Heart left ventricle (tissue), 16 donors: ENCODE measurements at regions of chr11 and their contacts with region 1.

Region 1: GRCh38 chr11:119196833-119197483 is 9.2 kb upstream of the CBL start:
- DNase-seq: peak in 3 of 5 donors; percentile 50 to 68 (median 63)
- ATAC-seq: peak in 3 of 4 donors; percentile 87 to 90 (median 90)
- H3K4me3 ChIP-seq: no peak overlapping the region
- H3K27ac ChIP-seq: no peak overlapping the region
- H3K4me1 ChIP-seq: peaks cover 0 to 16% (median 0%) of the 10 kb centered on the region in 12 donors
- H3K27me3 ChIP-seq: no peaks in the 10 kb centered on the region
- CTCF ChIP-seq: peak; percentile 67 to 87 (median 80)
- POLR2A ChIP-seq: no peak

Region 2: DNA sequence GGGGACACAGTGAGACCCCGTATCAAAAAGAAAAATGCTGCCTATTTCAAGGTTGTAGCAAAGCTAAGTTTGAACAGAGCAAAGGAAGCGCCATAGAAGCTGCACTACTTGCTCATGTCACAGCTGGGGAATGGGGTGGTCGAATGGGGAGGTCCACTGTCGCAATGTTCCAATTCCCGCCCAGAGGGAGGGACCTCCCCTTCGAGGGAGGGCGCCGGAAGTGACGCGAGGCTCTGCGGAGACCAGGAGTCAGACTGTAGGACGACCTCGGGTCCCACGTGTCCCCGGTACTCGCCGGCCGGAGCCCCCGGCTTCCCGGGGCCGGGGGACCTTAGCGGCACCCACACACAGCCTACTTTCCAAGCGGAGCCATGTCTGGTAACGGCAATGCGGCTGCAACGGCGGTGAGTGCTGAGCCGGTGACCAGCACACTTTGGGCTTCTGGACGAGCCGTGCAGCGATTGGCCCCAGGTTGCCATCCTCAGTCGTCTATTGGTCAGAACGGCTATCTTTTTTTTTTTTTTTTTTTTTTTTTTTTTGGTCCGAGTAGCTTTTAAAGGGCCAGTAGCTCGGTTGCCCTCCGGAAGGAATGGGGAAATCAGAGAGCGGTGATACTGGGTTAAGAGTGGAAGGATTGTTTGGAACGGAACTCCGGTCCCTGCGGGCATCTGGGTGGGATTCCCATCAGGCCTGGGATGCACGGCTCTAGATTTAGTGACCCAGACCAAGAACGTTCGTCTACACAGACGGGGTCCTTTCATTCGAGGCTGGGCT is 112.1 kb before region 1 on chr11 and contains the start of gene HMBS:
- intact Hi-C with region 1: loop called in 2 of 10 experiments (anchors 10 kb)
- DNase-seq: peak; percentile 92 to 97 (median 95)
- ATAC-seq: peak; percentile 95 to 98 (median 98)
- H3K4me3 ChIP-seq: peak within 1 kb of the TSS; percentile 49 to 89 (median 77)
- H3K27ac ChIP-seq: peak within 1 kb of the TSS; percentile 73 to 98 (median 91)
- H3K4me1 ChIP-seq: peaks cover 0 to 33% (median 11%) of the 10 kb centered on the region in 12 donors
- H3K27me3 ChIP-seq: no peaks in the 10 kb centered on the region
- CTCF ChIP-seq: no peak
- POLR2A ChIP-seq: peak in 1 of 2 donors; percentile 47
- total RNA-seq, gene HMBS: 8.1 to 24.1 (median 16.6) TPM

Region 3: DNA sequence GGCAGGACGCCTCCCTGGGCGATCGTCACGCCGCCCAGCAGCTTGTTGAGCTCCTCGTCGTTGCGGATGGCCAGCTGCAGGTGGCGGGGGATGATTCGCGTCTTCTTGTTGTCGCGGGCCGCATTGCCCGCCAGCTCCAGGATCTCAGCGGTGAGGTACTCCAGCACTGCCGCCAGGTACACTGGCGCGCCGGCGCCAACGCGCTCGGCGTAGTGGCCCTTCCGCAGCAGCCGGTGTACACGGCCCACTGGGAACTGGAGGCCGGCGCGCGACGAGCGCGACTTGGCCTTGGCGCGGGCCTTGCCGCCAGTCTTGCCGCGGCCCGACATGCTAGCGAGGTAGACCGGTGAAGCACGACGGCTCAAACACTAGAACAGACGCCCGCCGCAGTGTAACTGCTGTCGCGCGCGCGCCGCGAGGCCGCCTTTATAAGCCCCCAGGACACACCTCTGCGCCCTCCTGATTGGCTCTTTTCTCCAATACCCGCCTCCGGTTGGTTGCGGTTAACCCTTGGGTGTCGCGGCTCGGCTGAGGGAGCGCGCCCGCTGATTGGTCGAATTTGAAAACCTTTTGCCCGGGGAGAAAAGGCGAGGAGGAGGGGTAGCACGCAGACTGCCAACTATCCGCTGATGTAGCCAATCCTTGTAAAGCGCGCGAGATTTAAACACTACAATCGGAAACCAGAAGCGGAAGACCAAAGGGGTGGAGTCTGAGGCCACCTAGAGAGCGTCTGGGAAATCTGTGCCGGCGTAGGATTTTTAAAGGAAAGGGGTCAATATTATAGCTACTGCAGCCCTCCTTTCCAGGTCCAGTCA is 101.7 kb before region 1 on chr11:
- intact Hi-C with region 1: loop called in 5 of 10 experiments (anchors 2 to 10 kb)
- DNase-seq: peak; percentile 99
- ATAC-seq: peak; percentile 96 to 98 (median 96)
- H3K4me3 ChIP-seq: peak overlapping the region; percentile 62 to 88 (median 77)
- H3K27ac ChIP-seq: peak overlapping the region; percentile 60 to 97 (median 89)
- H3K4me1 ChIP-seq: peaks cover 7 to 38% (median 20%) of the 10 kb centered on the region in 12 donors
- H3K27me3 ChIP-seq: no peaks in the 10 kb centered on the region
- CTCF ChIP-seq: peak in 5 of 12 donors; percentile 0 to 30 (median 6)
- POLR2A ChIP-seq: peak; percentile 70 to 98

Region 4: DNA sequence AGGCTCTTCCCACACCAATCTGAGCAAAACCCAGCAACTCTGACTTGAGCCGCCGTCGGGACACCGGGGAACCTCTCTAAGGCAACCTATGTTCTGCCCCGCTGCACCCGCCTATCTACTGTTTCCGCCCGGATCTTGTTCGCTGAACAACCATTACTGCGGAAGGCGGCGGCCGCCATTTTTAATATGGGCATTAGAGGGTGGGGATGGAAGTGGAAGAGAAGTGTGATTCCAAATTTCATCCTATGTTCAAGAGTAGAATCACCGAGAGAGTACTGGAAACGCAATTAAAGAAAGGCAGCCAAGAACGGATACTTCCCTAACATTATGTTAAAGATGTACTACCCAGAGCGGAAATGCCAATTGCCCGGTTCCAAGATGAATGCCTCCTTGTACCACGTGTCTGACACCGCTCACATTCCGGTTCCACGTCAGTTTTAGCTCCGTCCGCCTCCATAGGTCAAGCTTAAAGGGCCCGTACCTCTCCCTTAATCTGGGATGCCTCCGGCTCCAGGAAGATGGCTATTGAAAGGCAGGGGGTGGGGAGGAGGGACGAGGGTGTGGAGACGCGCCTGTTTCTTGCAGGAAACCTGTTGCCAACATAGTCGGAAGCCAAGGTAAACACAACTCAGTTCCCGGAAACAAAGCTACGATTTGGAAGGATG is 95.1 kb before region 1 on chr11 and contains the start of gene DPAGT1:
- intact Hi-C with region 1: loop called in 3 of 10 experiments (anchors 5 to 10 kb)
- DNase-seq: peak; percentile 89 to 94 (median 92)
- ATAC-seq: peak; percentile 93 to 97 (median 96)
- H3K4me3 ChIP-seq: peak within 1 kb of the TSS; percentile 56 to 94 (median 84)
- H3K27ac ChIP-seq: peak within 1 kb of the TSS; percentile 78 to 97 (median 92)
- H3K4me1 ChIP-seq: peaks cover 8 to 43% (median 34%) of the 10 kb centered on the region in 12 donors
- H3K27me3 ChIP-seq: no peaks in the 10 kb centered on the region
- CTCF ChIP-seq: no peak
- POLR2A ChIP-seq: no peak
- total RNA-seq, gene DPAGT1: 11.2 to 32.4 (median 16.5) TPM

Region 5: DNA sequence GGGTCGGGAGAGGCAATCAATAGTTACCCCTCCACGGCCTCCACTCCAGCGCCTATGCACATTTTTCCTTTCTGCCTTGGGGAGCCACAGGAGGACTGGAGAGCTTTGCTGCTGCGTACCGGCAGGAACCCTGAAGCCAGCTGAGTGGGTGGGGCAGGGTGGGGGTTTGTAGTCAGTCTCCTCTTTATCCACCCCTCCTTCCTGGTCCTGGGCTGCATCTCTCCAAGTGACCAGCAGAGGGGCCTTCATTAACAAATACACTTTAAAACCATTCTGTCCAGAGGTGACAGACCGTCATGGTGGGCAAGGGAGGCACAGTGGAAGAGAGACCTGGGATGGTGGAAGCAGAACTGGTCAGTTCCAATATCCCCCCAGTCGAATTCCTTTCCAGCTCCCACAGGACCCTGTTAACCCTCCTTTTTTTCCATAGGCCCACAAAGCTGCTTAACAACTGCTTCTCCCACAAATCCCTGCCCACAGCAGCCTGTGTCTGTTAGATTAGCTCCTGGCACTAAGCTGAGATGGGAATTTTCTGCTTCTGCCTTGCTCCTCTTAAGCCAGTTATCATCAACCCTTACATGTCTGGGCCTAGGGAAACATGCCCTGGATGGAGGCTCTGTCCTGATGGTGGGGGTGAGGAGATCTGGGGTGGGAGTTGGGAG is 52.0 kb before region 1 on chr11:
- intact Hi-C with region 1: loop called in 9 of 10 experiments (anchors 1 to 5 kb)
- DNase-seq: peak in 4 of 5 donors; percentile 42 to 65 (median 47)
- ATAC-seq: peak; percentile 67 to 91 (median 81)
- H3K4me3 ChIP-seq: no peak overlapping the region
- H3K27ac ChIP-seq: no peak overlapping the region
- H3K4me1 ChIP-seq: peaks cover 0 to 23% (median 7%) of the 10 kb centered on the region in 12 donors
- H3K27me3 ChIP-seq: peaks cover 0 to 39% (median 0%) of the 10 kb centered on the region in 9 donors
- CTCF ChIP-seq: peak; percentile 46 to 72 (median 62)
- POLR2A ChIP-seq: no peak

Region 6: GRCh38 chr11:119153049-119153818 is 43.7 kb before region 1 on chr11:
- intact Hi-C with region 1: loop called in 5 of 10 experiments (anchors 5 kb)
- DNase-seq: no peak
- ATAC-seq: no peak
- H3K4me3 ChIP-seq: no peak overlapping the region
- H3K27ac ChIP-seq: no peak overlapping the region
- H3K4me1 ChIP-seq: peaks cover 0 to 16% (median 7%) of the 10 kb centered on the region in 12 donors
- H3K27me3 ChIP-seq: peaks cover 0 to 25% (median 0%) of the 10 kb centered on the region in 9 donors
- CTCF ChIP-seq: no peak
- POLR2A ChIP-seq: no peak

Region 7: DNA sequence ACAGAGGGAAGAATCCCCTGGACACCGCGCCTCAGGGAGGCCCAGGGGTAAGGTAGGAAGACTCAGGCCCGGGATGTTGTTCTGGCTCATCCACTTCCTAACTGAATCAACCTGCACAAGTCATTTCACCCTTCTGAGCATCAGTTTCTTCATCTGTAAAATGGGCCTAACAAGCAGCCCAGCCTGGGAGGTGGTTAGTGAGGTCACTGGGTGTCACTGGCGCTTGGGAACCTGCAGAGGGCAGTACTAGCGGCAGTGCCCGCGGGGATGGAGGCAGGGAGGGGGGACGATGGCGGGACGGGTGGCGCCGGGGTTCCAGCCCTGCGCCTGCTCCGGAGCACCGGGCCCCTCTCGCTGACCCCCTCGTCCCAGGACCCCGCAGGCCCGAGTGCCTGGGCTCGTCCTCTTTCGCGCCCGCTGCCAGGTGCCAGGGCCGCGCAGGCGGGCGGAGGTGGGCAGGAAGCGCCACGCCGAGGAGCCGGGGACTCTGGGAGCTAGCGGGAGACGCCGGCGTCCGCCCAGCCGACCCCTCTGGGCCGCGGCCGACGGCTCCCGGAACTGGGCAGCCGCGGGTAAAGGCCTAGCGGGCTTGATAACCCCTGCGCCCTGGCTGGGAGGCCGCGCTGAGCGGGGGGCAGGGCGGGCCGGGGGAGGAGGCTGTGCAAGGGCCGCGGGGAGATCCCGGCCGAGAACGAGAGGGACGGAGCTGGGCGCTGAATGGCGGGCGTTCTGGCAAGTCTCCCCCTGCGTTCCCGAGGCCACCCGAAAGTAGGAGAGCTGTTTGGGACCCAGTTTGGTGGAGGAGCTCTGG is 28.3 kb before region 1 on chr11 and contains the start of gene NLRX1:
- intact Hi-C with region 1: loop called in 2 of 10 experiments (anchors 2 kb)
- DNase-seq: peak; percentile 85 to 92 (median 89)
- ATAC-seq: peak; percentile 86 to 96 (median 94)
- H3K4me3 ChIP-seq: peak within 1 kb of the TSS; percentile 40 to 99 (median 92)
- H3K27ac ChIP-seq: peak within 1 kb of the TSS; percentile 80 to 98 (median 96)
- H3K4me1 ChIP-seq: peaks cover 0 to 19% (median 6%) of the 10 kb centered on the region in 12 donors
- H3K27me3 ChIP-seq: no peaks in the 10 kb centered on the region
- CTCF ChIP-seq: peak; percentile 76 to 90 (median 85)
- POLR2A ChIP-seq: peak; percentile 12 to 71
- total RNA-seq, gene NLRX1: 19.7 to 47.0 (median 30.7) TPM